A549 (cell line): ENCODE measurements at regions of chr16 and their contacts with region 1.

Region 1: DNA sequence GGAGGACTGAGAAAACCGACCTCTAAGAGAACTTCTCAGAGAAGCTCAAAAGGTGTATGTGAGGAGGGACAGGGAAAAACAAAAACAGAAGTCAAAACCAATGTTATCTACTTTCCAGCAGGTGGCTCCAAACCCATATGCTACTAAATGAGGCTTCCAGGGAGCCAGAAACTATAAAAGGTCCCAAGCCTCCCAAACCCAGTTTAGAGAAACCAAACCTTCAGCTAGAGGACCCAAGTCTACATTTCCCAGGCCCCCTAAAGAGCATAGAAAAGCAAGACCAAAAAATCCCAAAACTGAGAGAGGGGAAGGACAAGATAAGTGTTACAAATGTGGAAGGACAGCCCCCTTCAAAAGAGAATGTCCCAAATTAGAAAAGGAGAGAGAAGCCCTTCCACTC is 3.7 kb downstream of the HPR start:
- DNase-seq: peak; percentile 48 to 53
- ATAC-seq: peak; percentile 86; a peak in 5 of 6 replicates
- H3K4me3 ChIP-seq: no peak overlapping the region
- H3K27ac ChIP-seq: no peak overlapping the region
- H3K4me1 ChIP-seq: no peaks in the 10 kb centered on the region
- CTCF ChIP-seq: peak; percentile 63
- EP300 ChIP-seq: no peak
- POLR2A ChIP-seq: no peak
- RAD21 ChIP-seq: peak; percentile 59 to 69

Region 2: GRCh38 chr16:72085002-72085401 is 18.3 kb after region 1 on chr16:
- CTCF ChIA-PET with region 1: interaction called, 21 read pairs
- POLR2A ChIA-PET with region 1: no interaction called
- DNase-seq: no peak
- ATAC-seq: no peak
- H3K4me3 ChIP-seq: no peak overlapping the region
- H3K27ac ChIP-seq: no peak overlapping the region
- H3K4me1 ChIP-seq: peaks cover 7% of the 10 kb centered on the region; the same call in 1 of the 3 replicates
- CTCF ChIP-seq: no peak
- EP300 ChIP-seq: no peak
- POLR2A ChIP-seq: no peak
- RAD21 ChIP-seq: no peak

Region 3: GRCh38 chr16:72093448-72094265 is 26.9 kb after region 1 on chr16 and contains the starts of genes DHX38 and TXNL4B:
- CTCF ChIA-PET with region 1: interaction called, 43 read pairs
- POLR2A ChIA-PET with region 1: interaction called, 3 read pairs
- DNase-seq: peak; percentile 99 to 100
- ATAC-seq: peak; percentile 99
- H3K4me3 ChIP-seq: peak within 1 kb of the TSS; percentile 91
- H3K27ac ChIP-seq: peak within 1 kb of the TSS; percentile 92 to 95
- H3K4me1 ChIP-seq: peaks cover 22% of the 10 kb centered on the region; the same call in 2 of the 3 replicates
- CTCF ChIP-seq: no peak
- EP300 ChIP-seq: no peak
- POLR2A ChIP-seq: peak; percentile 73
- RAD21 ChIP-seq: no peak
- polyA plus RNA-seq, gene DHX38: 37.4 and 41.9 TPM in 2 replicates
- polyA plus RNA-seq, gene TXNL4B: 22.7 and 32.7 TPM in 2 replicates

Region 4: GRCh38 chr16:72099377-72099818 is 32.7 kb after region 1 on chr16:
- CTCF ChIA-PET with region 1: interaction called, 43 read pairs
- POLR2A ChIA-PET with region 1: no interaction called
- DNase-seq: peak; percentile 76 to 87
- ATAC-seq: peak; percentile 94 to 98
- H3K4me3 ChIP-seq: no peak overlapping the region
- H3K27ac ChIP-seq: no peak overlapping the region
- H3K4me1 ChIP-seq: peaks cover 8% of the 10 kb centered on the region; the same call in 2 of the 3 replicates
- CTCF ChIP-seq: peak; percentile 57
- EP300 ChIP-seq: no peak
- POLR2A ChIP-seq: no peak
- RAD21 ChIP-seq: peak; percentile 71 to 78